Calu3 (cell line): ENCODE measurements at regions of chr11 and their contacts with region 1.

Region 1: DNA sequence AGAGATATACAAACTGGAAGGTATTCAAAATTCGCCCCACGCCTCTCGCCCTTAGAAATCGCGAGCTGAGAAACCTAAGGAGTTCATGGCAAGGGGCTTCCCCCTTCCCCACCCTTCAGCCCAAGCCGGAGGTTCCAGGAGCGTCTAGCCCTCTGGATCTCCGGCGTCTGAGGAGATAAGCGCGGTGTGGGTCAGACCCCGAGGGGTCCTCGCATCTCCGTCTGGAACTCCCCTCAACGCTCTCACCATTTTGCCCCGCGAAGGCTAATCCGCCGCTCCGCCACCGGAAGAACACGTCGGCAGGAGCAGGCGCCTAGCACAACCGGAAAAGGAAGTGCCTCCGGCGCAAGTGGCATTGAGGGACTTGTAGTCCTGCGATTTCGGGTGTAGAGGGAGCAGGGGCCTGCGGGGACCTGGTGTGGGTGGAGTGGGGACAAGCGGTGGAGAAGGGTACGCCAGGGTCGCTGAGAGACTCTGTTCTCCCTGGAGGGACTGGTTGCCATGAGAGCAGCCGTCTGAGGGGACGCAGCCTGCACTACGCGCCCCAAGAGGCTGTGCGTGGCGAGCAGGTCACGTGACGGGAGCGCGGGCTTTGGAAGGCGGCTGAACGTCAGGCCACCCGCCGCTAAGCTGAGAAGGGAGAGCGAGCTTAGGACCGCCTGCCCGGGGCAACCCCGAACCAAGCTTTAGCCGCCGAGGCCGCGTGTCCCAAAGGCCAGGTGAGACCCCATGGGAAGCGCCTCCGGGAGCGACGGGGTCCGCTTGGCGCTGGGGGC is at the starts of genes FEN1 and TMEM258:
- DNase-seq: peak; percentile 90
- H3K4me3 Mint-ChIP-seq: peak within 1 kb of the TSS; percentile 93
- H3K27ac Mint-ChIP-seq: peak within 1 kb of the TSS; percentile 99
- H3K4me1 Mint-ChIP-seq: peaks cover 36% of the 10 kb centered on the region
- H3K27me3 Mint-ChIP-seq: no peaks in the 10 kb centered on the region
- CTCF ChIP-seq: no peak
- total RNA-seq, gene FEN1: 72.4 TPM in 2 replicates
- total RNA-seq, gene TMEM258: 140 and 146 TPM in 2 replicates

Region 2: DNA sequence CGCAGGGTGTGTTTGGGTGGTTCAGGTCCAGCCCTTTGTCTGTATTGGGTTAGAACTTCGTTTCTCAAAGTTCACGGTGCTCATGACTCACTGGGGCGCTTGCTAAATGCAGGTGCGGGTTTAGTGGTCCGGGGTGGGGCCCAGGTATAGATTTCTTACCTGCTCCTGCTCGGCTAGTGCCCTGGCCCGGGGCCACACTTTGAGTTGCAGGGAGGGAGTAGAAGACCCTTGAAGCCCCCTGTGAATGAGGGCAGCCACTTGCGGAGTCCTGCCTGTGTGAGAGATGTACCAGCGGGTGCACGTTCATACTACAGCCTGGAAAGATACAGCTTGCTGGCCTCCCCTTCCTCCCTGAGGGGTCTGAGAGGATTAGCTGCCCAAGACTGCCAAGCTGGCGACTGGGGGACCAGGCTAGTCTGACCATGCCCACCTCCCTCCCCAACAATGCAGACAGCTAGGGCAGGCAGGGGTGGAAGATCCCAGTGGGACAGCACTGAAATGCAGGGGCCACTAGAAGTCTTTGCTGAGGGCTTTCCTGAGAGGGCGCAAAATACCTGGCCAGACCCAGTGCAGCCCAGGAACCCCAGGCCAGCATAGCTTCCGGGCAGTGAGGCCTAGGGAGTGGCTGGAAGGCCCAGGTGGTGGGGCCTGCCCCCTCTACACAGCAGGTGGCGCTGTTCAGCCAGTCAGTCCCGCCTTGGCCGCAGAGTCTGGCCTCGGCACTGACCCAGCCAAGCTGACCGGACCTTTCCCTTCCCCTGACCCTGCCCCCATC is 45.1 kb before region 1 on chr11:
- CTCF ChIA-PET with region 1: interaction called, 45 read pairs
- intact Hi-C with region 1: no loop called
- DNase-seq: peak; percentile 91
- H3K4me3 Mint-ChIP-seq: no peak overlapping the region
- H3K27ac Mint-ChIP-seq: no peak overlapping the region
- H3K4me1 Mint-ChIP-seq: peaks cover 16% of the 10 kb centered on the region
- H3K27me3 Mint-ChIP-seq: no peaks in the 10 kb centered on the region
- CTCF ChIP-seq: peak; percentile 90

Region 3: GRCh38 chr11:61816736-61817455 is 24.4 kb after region 1 on chr11 and contains the start of gene FADS1:
- CTCF ChIA-PET with region 1: interaction called, 21 read pairs
- intact Hi-C with region 1: no loop called
- DNase-seq: peak; percentile 97
- H3K4me3 Mint-ChIP-seq: peak within 1 kb of the TSS; percentile 89
- H3K27ac Mint-ChIP-seq: peak within 1 kb of the TSS; percentile 91
- H3K4me1 Mint-ChIP-seq: peaks cover 8% of the 10 kb centered on the region
- H3K27me3 Mint-ChIP-seq: no peaks in the 10 kb centered on the region
- CTCF ChIP-seq: peak; percentile 63
- total RNA-seq, gene FADS1: 55.6 and 74.1 TPM in 2 replicates

Region 4: DNA sequence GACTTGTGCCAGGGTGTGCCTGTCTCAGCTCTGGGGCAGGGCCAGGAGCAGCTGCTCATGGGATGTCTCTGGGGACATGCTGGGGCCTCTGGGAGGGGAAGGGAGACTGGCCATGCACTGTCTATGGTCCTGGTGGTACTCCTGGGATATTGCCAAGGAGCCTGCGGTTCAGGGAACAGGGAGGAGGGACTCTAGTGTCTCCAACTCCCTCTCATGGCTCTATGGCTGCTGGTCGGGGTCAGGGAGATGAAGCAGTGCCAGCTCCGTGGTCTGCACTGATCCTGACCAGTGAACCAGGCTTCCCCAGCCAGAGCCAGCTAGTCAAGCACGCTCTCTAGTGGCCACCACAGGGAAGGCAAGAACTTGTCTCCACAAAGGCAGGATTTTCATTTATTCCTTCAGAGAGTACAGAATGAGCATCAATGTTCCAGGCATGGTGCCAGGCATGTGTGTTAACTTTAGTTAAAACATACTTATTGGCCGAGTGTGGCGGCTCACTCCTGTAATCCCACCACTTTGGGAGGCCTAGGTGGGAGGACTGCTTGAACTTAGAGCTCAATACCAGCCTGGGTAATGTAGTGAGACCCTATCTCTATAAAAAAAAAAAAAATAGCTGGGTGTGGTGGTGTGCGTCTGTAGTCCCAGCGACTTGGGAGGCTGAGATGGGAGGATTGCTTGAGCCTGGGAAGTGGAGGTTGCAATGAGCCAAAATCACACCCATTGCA is 155.2 kb after region 1 on chr11:
- CTCF ChIA-PET with region 1: interaction called, 19 read pairs
- intact Hi-C with region 1: loop called (anchors 10 kb)
- DNase-seq: peak; percentile 80
- H3K4me3 Mint-ChIP-seq: no peak overlapping the region
- H3K27ac Mint-ChIP-seq: no peak overlapping the region
- H3K4me1 Mint-ChIP-seq: peaks cover 27% of the 10 kb centered on the region
- H3K27me3 Mint-ChIP-seq: peaks cover 46% of the 10 kb centered on the region
- CTCF ChIP-seq: peak; percentile 78

Region 5: DNA sequence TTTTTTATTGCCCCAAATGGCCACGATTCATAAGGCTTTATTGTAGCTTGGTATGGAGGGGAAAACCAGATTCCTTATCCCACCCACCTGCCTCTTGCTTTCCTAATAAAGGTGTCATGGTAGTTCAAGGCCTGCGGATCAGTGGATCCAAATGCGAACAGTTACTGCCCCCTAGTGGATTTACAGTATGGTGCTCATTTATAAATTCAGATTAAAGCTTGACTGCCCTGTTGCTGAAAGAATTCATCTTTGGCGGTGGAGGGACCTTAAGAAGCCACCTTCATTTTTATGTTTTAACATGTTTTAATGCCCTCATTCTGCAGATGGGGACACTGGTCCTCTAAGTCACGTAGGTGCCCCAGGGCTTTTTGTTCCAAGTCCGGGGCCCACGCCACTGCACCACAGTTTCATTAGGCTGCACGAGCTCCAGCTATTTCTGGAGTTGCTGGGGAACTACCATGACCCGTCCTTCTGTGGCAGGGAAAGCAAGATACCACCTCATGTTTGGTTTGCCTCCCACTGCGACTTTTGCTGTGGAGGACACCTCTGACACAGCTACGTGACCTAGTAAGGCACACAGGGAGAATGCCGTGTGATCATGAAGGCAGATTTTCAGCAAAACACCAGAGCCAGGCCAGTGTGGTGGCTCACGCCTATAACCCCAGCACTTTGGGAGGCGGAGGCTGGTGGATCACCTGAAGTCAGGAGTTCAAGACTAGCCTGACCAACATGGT is 315.7 kb after region 1 on chr11:
- CTCF ChIA-PET with region 1: interaction called, 21 read pairs
- intact Hi-C with region 1: loop called (anchors 1 kb)
- DNase-seq: peak; percentile 48
- H3K4me3 Mint-ChIP-seq: no peak overlapping the region
- H3K27ac Mint-ChIP-seq: no peak overlapping the region
- H3K4me1 Mint-ChIP-seq: peaks cover 9% of the 10 kb centered on the region
- H3K27me3 Mint-ChIP-seq: peaks cover 18% of the 10 kb centered on the region
- CTCF ChIP-seq: peak; percentile 69